ENCODE measurements at regions of chr15 and their contacts with region 1.

Region 1: GRCh38 chr15:99578809-99579208 is 13.0 kb downstream of the MEF2A start:
- DNase-seq: no peak
- H3K4me3 ChIP-seq: no peak overlapping the region
- H3K27ac ChIP-seq: peak overlapping the region in 1 of 2 donors; percentile 16
- H3K4me1 ChIP-seq: peaks cover 0 to 68% (median 22%) of the 10 kb centered on the region in 4 donors
- H3K27me3 ChIP-seq: no peaks in the 10 kb centered on the region
- CTCF ChIP-seq: no peak

Region 2: GRCh38 chr15:97993310-97993738 is 1585.5 kb before region 1 on chr15:
- intact Hi-C with region 1: loop called (anchors 5 kb)
- DNase-seq: no peak
- H3K4me3 ChIP-seq: no peak overlapping the region
- H3K27ac ChIP-seq: no peak overlapping the region
- H3K4me1 ChIP-seq: no peaks in the 10 kb centered on the region
- H3K27me3 ChIP-seq: no peaks in the 10 kb centered on the region
- CTCF ChIP-seq: no peak

Region 3: DNA sequence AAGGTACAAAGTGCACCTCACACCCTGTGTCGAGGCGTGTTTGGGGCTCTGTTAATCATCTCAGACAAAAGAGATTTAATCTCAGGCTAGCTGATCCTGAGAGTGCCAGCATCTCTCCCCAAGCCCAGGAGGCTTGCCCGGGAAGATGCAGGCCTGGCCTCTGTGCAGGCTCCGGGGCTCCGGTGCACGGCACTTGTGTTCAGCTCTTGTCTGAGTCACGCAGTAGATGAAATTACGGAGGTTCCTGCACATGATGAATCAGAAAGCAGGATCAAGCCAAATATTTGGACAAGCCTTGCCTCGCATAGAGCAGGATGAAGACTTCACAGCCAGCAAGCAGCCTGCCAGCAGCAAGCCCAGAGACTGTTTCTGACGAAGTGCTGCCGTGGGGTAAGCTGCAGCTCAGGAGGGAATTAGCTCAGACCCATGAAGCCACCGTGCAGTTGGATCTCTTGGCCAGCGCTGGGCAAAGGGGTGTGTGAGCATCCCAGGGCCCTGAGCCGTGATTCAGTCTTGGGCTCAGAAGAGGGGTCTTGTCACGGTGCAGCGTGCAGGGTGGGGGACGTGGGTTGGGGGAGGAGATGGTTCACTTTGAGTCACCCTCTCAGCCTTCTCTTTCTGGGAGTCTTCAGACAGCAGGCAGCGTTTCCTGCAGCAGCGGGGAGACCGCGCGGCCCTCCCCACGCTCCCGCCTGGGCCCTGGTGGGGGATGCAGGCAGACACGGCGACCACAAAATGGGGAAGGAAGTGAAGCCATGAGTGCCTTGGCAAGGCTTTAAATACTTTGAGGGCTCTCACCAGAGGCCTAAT is 102.2 kb before region 1 on chr15:
- intact Hi-C with region 1: no loop called
- DNase-seq: peak; percentile 78 to 91
- H3K4me3 ChIP-seq: no peak overlapping the region
- H3K27ac ChIP-seq: peak overlapping the region; percentile 68 to 70
- H3K4me1 ChIP-seq: peaks cover 0 to 30% (median 18%) of the 10 kb centered on the region in 4 donors
- H3K27me3 ChIP-seq: no peaks in the 10 kb centered on the region
- CTCF ChIP-seq: no peak

Region 4: GRCh38 chr15:99507504-99508310 is 71.1 kb before region 1 on chr15:
- intact Hi-C with region 1: no loop called
- DNase-seq: peak; percentile 41 to 77
- H3K4me3 ChIP-seq: peak overlapping the region; percentile 1 to 15
- H3K27ac ChIP-seq: peak overlapping the region; percentile 58 to 60
- H3K4me1 ChIP-seq: peaks cover 5 to 39% (median 25%) of the 10 kb centered on the region in 4 donors
- H3K27me3 ChIP-seq: no peaks in the 10 kb centered on the region
- CTCF ChIP-seq: no peak

Measured in tibial artery (tissue), 4 donors.